Endothelial cell of umbilical vein (primary cell): ENCODE measurements at regions of chr20 and their contacts with region 1.

Region 1: GRCh38 chr20:48295445-48295963 is 510.2 kb upstream of the SULF2 start:
- DNase-seq: peak; percentile 95
- H3K4me3 ChIP-seq: no peak overlapping the region
- H3K27ac ChIP-seq: peak overlapping the region; percentile 93
- H3K4me1 ChIP-seq: peaks cover 47% of the 10 kb centered on the region
- H3K27me3 ChIP-seq: no peaks in the 10 kb centered on the region
- CTCF ChIP-seq: peak; percentile 22 to 36
- POLR2A ChIP-seq: no peak

Region 2: GRCh38 chr20:47677635-47678453 is 617.7 kb before region 1 on chr20:
- CTCF ChIA-PET with region 1: interaction called, 20 read pairs
- POLR2A ChIA-PET with region 1: no interaction called
- dilution Hi-C with region 1: no loop called
- intact Hi-C with region 1: loop called (anchors 1 kb)
- DNase-seq: peak; percentile 43
- H3K4me3 ChIP-seq: no peak overlapping the region
- H3K27ac ChIP-seq: no peak overlapping the region
- H3K4me1 ChIP-seq: no peaks in the 10 kb centered on the region
- H3K27me3 ChIP-seq: no peaks in the 10 kb centered on the region
- CTCF ChIP-seq: peak; percentile 75 to 92
- POLR2A ChIP-seq: no peak

Region 3: DNA sequence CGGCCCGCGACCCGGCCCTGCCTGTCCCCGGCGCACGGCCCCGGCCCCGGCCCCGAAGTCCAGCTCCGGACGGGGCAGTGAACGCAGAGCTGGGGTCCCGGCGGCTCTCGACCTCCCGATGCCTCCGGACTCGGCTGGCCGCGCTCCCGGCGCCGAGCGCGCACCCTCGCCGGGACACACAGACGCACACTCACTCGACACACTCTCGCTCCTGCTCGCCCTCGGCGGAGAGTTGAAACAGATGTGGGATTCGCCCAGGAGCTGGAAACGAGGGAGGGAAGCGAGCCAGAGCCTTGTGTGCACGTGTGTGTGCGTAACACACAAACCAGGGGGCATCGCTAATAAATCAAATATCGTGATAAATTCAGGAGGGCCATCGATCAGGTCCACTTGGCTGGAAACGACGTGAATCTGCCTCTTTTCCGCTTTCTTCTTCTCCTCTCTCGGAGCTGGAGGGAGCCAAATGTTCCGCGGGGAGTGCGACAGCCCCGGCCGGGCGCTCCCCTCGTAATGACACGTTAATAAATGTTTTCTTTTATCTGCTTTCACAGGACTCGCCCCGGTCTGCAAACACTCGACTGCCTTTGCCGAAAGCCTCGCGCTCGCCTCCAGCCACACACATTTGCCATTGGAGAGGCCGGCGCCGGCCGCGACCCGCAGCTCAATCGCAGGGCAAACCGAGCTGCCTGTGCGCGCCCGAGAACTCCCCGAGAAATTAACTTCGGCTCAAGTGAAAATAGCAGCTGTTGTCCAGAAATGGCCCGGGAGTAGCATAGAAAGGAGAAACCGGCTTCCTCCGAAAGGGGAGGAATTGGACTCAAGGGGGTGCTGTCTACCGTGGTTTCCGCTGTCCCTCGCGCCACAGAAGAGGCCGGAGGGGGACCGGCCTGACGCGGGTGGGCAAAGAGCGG is 509.4 kb before region 1 on chr20:
- CTCF ChIA-PET with region 1: interaction called, 21 read pairs
- POLR2A ChIA-PET with region 1: no interaction called
- dilution Hi-C with region 1: no loop called
- intact Hi-C with region 1: loop called (anchors 1 kb)
- DNase-seq: peak; percentile 85
- H3K4me3 ChIP-seq: peak overlapping the region; percentile 19 to 60 (median 46)
- H3K27ac ChIP-seq: peak overlapping the region; percentile 22
- H3K4me1 ChIP-seq: peaks cover 22% of the 10 kb centered on the region
- H3K27me3 ChIP-seq: peaks cover 0 to 3% of the 10 kb centered on the region in 2 experiments
- CTCF ChIP-seq: peak; percentile 58 to 73
- POLR2A ChIP-seq: no peak

Region 4: GRCh38 chr20:47950073-47950913 is 345.2 kb before region 1 on chr20:
- CTCF ChIA-PET with region 1: interaction called, 7 read pairs
- POLR2A ChIA-PET with region 1: no interaction called
- dilution Hi-C with region 1: no loop called
- intact Hi-C with region 1: loop called (anchors 5 kb)
- DNase-seq: peak; percentile 77
- H3K4me3 ChIP-seq: no peak overlapping the region
- H3K27ac ChIP-seq: peak overlapping the region; percentile 69
- H3K4me1 ChIP-seq: peaks cover 26% of the 10 kb centered on the region
- H3K27me3 ChIP-seq: no peaks in the 10 kb centered on the region
- CTCF ChIP-seq: no peak
- POLR2A ChIP-seq: no peak

Region 5: DNA sequence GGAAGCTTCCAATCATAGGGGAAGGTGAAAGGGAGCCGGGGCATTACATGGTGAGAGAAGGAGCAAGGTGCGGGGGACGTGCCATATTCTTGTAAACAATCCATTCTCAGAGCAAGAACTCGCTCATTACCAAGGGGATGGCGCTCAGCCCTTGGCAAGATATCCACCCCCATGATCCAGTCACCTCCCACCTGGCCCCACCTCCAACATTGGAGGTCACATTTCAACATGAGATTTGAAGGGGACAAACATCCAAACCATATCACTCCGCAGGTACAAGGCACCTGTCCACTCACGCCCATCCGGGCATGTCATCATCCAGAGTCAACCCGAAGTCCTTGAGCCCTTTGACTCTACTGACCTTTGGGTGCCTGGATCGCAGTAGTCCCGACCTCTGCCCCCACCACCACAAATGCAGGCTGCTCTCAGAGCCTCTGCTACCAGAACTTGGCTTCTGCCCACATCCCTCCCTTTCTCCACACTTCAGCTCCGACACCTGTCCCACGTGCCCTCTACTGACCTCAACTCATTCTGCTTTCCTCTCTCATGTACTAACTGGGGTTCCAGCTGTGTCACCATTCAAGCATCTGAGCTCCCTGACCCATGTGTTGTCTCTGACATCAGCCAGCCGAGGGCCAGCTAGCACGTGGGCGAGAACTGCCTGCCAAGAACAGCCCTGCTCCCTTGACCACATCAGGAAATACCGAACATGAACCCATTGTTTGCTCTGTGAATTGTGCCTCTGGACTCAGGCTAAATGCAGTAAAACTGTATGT is 12.0 kb before region 1 on chr20:
- CTCF ChIA-PET with region 1: interaction called, 17 read pairs
- POLR2A ChIA-PET with region 1: interaction called, 12 read pairs
- dilution Hi-C with region 1: no loop called
- intact Hi-C with region 1: loop called (anchors 1 kb)
- DNase-seq: peak; percentile 99
- H3K4me3 ChIP-seq: no peak overlapping the region
- H3K27ac ChIP-seq: peak overlapping the region; percentile 68
- H3K4me1 ChIP-seq: peaks cover 55% of the 10 kb centered on the region
- H3K27me3 ChIP-seq: no peaks in the 10 kb centered on the region
- CTCF ChIP-seq: no peak
- POLR2A ChIP-seq: no peak

Region 6: GRCh38 chr20:48682529-48683251 is 387.2 kb after region 1 on chr20:
- CTCF ChIA-PET with region 1: no interaction called
- POLR2A ChIA-PET with region 1: no interaction called
- dilution Hi-C with region 1: no loop called
- intact Hi-C with region 1: no loop called
- DNase-seq: peak; percentile 89
- H3K4me3 ChIP-seq: no peak overlapping the region
- H3K27ac ChIP-seq: peak overlapping the region; percentile 48
- H3K4me1 ChIP-seq: peaks cover 56% of the 10 kb centered on the region
- H3K27me3 ChIP-seq: no peaks in the 10 kb centered on the region
- CTCF ChIP-seq: no peak
- POLR2A ChIP-seq: no peak